ENCODE measurements at regions of chr1 and their contacts with region 1.

Region 1: DNA sequence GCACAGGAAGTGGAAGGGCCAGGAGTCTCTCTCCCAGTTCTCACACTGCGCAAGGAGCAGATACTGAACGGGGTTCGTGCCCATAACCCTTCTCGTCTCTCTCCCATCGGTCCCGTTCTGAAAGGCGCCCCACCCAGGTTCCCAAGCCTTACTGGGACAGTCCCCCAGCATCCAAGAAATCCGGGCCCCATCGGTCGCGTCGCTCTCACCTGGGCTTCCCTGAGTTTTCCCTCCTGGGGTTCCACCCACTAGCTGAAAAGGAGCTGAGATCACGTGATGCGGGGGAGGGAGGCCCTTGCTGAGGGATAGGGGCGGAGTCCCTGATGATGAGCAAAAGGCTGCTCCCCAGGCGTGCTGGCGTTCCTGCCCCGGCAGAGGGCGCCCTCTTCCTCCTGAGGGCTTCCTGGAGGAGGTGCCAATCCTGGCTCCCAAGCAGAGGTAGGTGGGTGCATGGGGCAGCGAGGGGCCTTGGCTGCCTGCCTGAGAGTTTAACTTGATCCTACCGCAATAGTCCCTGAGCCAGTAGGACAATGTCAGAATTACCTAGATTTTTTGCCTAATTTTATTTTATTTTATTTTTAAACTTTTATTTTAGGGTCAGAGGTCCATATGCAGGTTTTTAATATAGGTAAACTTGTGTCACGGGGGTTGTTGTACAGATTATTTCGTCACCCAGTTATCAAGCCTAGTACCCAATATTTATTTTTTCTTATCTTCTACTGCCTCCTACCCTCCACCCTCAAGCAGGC is at the start of gene SPOCD1:
- DNase-seq: peak; percentile 92 to 100
- H3K4me3 ChIP-seq: peak within 1 kb of the TSS; percentile 31 to 60 (median 42); a peak in 7 of 8 replicates
- H3K27ac ChIP-seq: no peak within 1 kb of the TSS
- H3K4me1 ChIP-seq: peaks cover 0 to 2% (median 0%) of the 10 kb centered on the region in 4 experiments; a peak in 1 of 7 replicates
- H3K27me3 ChIP-seq: no peaks in the 10 kb centered on the region; a peak in 1 of 7 replicates
- CTCF ChIP-seq: peak; percentile 90 to 99 (median 99)
- EP300 ChIP-seq: no peak
- POLR2A ChIP-seq: peak in 1 of 2 experiments; percentile 60; a peak in 2 of 3 replicates
- RAD21 ChIP-seq: peak; percentile 87 to 93
- total RNA-seq, gene SPOCD1: 1.8 and 2.0 TPM in 2 replicates

Region 2: DNA sequence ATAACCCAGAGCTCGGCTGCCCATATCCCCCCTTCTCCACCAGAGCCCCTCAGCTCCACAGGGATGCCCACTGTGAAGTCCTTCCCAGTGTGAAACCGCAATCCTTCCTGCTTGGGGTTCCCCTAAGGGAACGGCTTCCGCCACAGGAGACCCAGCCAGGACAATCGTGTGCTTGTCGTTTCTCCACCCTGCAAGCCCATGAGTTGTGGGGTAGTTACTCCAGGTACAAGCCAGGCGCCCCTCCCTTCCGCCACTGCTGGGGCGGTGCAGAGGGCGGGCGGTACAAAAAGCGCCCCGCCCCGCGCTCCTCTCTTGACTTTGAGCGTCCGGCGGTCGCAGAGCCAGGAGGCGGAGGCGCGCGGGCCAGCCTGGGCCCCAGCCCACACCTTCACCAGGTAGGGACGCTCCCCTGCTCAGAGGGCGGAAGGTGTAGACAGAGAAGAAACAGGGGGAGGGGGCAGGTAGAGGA is 239.7 kb before region 1 on chr1 and contains the start of gene TINAGL1:
- CTCF ChIA-PET with region 1: no interaction called
- POLR2A ChIA-PET with region 1: no interaction called
- DNase-seq: peak in 1 of 2 experiments; percentile 83
- H3K4me3 ChIP-seq: peak within 1 kb of the TSS in 3 of 4 experiments; percentile 9 to 47 (median 23); a peak in 5 of 8 replicates
- H3K27ac ChIP-seq: no peak within 1 kb of the TSS
- H3K4me1 ChIP-seq: peaks cover 10 to 47% (median 28%) of the 10 kb centered on the region in 4 experiments
- H3K27me3 ChIP-seq: peaks cover 0 to 2% (median 0%) of the 10 kb centered on the region in 4 experiments; a peak in 1 of 7 replicates
- CTCF ChIP-seq: no peak
- EP300 ChIP-seq: no peak
- POLR2A ChIP-seq: no peak
- RAD21 ChIP-seq: no peak
- total RNA-seq, gene TINAGL1: 9.7 and 11.2 TPM in 2 replicates

Region 3: GRCh38 chr1:31769720-31770390 is 46.1 kb before region 1 on chr1:
- CTCF ChIA-PET with region 1: no interaction called
- POLR2A ChIA-PET with region 1: no interaction called
- DNase-seq: no peak
- H3K4me3 ChIP-seq: no peak overlapping the region
- H3K27ac ChIP-seq: no peak overlapping the region
- H3K4me1 ChIP-seq: peaks cover 5 to 30% (median 20%) of the 10 kb centered on the region in 4 experiments
- H3K27me3 ChIP-seq: peaks cover 26 to 47% (median 43%) of the 10 kb centered on the region in 4 experiments
- CTCF ChIP-seq: no peak
- EP300 ChIP-seq: no peak
- POLR2A ChIP-seq: no peak
- RAD21 ChIP-seq: no peak

Region 4: GRCh38 chr1:31834501-31834900 is 18.6 kb after region 1 on chr1:
- CTCF ChIA-PET with region 1: interaction called, 20 read pairs
- POLR2A ChIA-PET with region 1: interaction called, 3 read pairs
- DNase-seq: no peak
- H3K4me3 ChIP-seq: no peak overlapping the region
- H3K27ac ChIP-seq: no peak overlapping the region
- H3K4me1 ChIP-seq: no peaks in the 10 kb centered on the region; a peak in 1 of 7 replicates
- H3K27me3 ChIP-seq: no peaks in the 10 kb centered on the region
- CTCF ChIP-seq: peak in 1 of 3 experiments; percentile 26; a peak in 2 of 4 replicates
- EP300 ChIP-seq: no peak
- POLR2A ChIP-seq: no peak
- RAD21 ChIP-seq: 0 out of 4 replicates have a peak, but pooled peaks of 1 of the 2 experiments have one; percentile 16

Region 5: DNA sequence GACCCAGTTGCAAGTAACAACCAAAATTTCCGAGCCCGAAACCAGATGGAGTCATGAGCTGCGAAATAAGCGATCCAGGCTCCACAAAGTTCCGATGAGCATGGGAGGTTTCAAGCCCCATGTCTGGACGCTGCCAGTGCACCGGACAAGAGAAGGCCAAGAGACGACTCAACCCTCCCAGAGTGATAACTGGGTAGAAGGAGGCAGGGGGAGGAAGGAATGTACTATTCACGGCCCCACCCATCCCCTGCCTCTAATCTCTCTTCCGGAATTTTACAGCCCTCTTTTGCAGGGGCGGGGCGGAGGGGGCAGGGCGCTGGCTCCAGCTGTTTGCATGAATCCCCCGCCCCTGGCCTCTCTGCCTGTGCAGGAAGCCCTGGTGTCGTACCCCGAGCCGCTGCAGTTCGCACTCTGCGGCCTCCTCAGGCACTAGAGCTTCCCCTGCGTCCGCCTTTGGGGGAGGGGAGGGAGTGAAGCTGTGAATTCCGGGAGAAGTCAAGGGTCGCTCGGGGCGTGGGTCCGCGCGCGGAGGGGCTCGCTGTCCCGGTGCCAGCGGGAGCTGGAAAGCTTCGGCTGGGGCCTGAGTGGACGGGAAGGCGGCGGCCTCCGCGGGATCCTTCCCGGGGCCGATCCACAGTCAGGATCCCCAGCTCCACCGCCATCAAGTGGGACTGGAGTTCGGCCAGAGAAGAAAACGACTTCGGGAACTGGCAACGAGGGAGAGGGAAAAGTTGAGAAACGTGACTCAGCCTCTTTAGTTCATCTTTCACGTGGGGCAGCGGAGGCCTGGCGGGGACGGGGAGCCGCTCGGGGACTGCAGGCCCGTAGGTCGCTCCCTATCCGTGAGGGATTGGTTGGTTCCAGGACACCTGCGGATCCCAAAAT is 128.5 kb after region 1 on chr1:
- CTCF ChIA-PET with region 1: interaction called, 20 read pairs
- POLR2A ChIA-PET with region 1: interaction called, 4 read pairs
- DNase-seq: peak; percentile 82 to 93
- H3K4me3 ChIP-seq: peak overlapping the region; percentile 58 to 69 (median 66)
- H3K27ac ChIP-seq: peak overlapping the region; percentile 89
- H3K4me1 ChIP-seq: peaks cover 3 to 16% (median 5%) of the 10 kb centered on the region in 4 experiments
- H3K27me3 ChIP-seq: peaks cover 0 to 3% (median 0%) of the 10 kb centered on the region in 4 experiments; a peak in 2 of 7 replicates
- CTCF ChIP-seq: peak in 1 of 3 experiments; percentile 0; a peak in 1 of 4 replicates
- EP300 ChIP-seq: peak in 1 of 2 experiments; percentile 72; a peak in 1 of 3 replicates
- POLR2A ChIP-seq: peak; percentile 94 to 98
- RAD21 ChIP-seq: no peak; a peak in 1 of 4 replicates

Measured in H1 (cell line).